Vagina (tissue), 2 donors: ENCODE measurements at regions of chr6 and their contacts with region 1.

Region 1: DNA sequence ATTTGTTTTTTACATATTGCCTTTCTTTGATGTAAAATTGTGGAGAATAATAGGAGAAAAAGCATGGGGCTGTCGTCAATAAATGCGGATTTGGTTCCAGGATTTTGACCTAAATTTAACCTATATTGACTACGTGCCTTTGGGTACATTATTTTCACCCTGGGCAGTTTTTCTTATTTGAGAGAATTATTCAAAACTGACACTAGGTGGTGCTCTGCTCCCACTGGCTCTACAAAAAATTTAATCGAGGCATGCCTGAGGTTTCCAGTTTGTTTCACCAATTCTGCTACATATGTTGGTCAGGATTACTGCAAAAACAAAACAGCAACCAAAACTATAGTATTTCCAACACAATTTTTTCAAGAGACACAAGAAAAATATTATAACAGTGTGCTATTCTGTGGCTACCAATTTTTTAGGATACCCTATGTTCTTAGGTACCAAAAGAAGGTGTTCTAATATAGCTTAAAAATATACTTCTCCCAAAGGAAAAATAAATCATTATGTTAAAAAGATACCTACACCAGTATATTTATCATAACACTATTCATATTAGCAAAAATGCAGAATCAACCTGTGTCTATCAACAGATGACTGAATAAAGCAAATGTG is 48.6 kb upstream of the FABP7 start:
- DNase-seq: no peak
- H3K4me3 ChIP-seq: no peak overlapping the region
- H3K27ac ChIP-seq: no peak overlapping the region
- H3K4me1 ChIP-seq: peaks cover 10% of the 10 kb centered on the region
- H3K27me3 ChIP-seq: no peaks in the 10 kb centered on the region
- CTCF ChIP-seq: peak; percentile 35 to 72 (median 67)
- POLR2A ChIP-seq: no peak

Region 2: DNA sequence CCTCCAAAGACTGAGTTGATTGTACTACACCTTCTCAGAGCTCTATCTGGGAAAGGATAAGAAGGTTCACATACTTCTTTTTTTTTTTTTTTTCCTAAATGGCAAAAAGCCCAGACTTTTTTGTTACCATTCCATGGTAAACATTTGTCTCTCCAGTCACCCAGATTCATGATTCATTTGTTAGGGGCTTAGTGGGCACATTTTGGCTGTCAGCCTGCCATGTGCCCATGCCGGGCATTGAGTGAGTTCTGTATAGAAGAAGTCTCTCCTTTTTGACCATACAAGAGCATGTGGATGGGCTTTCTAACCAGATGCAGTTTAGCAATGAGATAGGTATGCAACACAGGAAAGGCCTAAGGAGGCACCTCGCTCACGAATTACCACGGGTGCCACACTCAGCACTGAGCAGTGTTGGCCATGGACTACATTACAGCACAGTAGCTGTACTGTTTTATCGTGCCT is 778.9 kb before region 1 on chr6:
- intact Hi-C with region 1: no loop called
- DNase-seq: no peak
- H3K4me3 ChIP-seq: no peak overlapping the region
- H3K27ac ChIP-seq: no peak overlapping the region
- H3K4me1 ChIP-seq: no peaks in the 10 kb centered on the region
- H3K27me3 ChIP-seq: no peaks in the 10 kb centered on the region
- CTCF ChIP-seq: no peak
- POLR2A ChIP-seq: no peak

Region 3: DNA sequence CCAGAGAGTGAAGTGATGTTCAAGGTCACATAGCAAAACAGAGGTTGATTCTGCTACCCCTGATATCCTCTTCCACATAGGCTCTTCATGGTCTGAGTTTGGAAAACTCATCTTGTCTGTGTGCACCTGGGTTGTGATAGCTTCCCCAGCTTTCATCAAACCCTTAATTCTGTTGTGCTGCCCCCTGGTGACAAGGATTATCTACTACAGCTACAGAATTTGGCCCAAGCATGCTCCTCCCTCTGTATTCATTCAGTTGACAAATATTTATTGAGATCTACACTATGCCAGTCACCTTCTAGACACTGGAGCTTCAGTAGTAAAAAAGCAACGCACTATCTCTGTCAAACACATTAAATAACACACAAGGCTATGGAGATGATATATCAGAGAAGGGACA is 108.6 kb after region 1 on chr6:
- intact Hi-C with region 1: loop called (anchors 10 kb)
- DNase-seq: no peak
- H3K4me3 ChIP-seq: no peak overlapping the region
- H3K27ac ChIP-seq: no peak overlapping the region
- H3K4me1 ChIP-seq: no peaks in the 10 kb centered on the region
- H3K27me3 ChIP-seq: no peaks in the 10 kb centered on the region
- CTCF ChIP-seq: peak; percentile 35 to 85 (median 73)
- POLR2A ChIP-seq: no peak